ENCODE measurements at regions of chr6 and their contacts with region 1.

Region 1: GRCh38 chr6:47621838-47622449 is 76.4 kb upstream of the ADGRF4 start:
- DNase-seq: no peak
- H3K4me3 ChIP-seq: no peak overlapping the region
- H3K27ac ChIP-seq: no peak overlapping the region
- H3K4me1 ChIP-seq: no peaks in the 10 kb centered on the region
- H3K27me3 ChIP-seq: no peaks in the 10 kb centered on the region
- CTCF ChIP-seq: no peak
- POLR2A ChIP-seq: no peak

Region 2: GRCh38 chr6:47769982-47770381 is 148.0 kb after region 1 on chr6:
- intact Hi-C with region 1: loop called (anchors 10 kb)
- DNase-seq: no peak
- H3K4me3 ChIP-seq: no peak overlapping the region
- H3K27ac ChIP-seq: no peak overlapping the region
- H3K4me1 ChIP-seq: no peaks in the 10 kb centered on the region
- H3K27me3 ChIP-seq: no peaks in the 10 kb centered on the region
- CTCF ChIP-seq: no peak
- POLR2A ChIP-seq: no peak

Region 3: GRCh38 chr6:48859562-48860123 is 1237.7 kb after region 1 on chr6:
- intact Hi-C with region 1: no loop called
- DNase-seq: no peak
- H3K4me3 ChIP-seq: no peak overlapping the region
- H3K27ac ChIP-seq: no peak overlapping the region
- H3K4me1 ChIP-seq: no peaks in the 10 kb centered on the region
- H3K27me3 ChIP-seq: no peaks in the 10 kb centered on the region
- CTCF ChIP-seq: no peak
- POLR2A ChIP-seq: no peak